Naive thymus-derived CD4-positive, alpha-beta T cell (primary cell): ENCODE measurements at regions of chr3 and their contacts with region 1.

Region 1: GRCh38 chr3:136861890-136862616 is at the start of gene NCK1:
- DNase-seq: peak; percentile 89 to 99 (median 98)
- ATAC-seq: peak; percentile 97
- H3K4me3 ChIP-seq: peak within 1 kb of the TSS; percentile 85
- H3K4me3 Mint-ChIP-seq: peak within 1 kb of the TSS; percentile 91 to 99 (median 94)
- H3K27ac ChIP-seq: peak within 1 kb of the TSS; percentile 93
- H3K27ac Mint-ChIP-seq: peak within 1 kb of the TSS; percentile 93 to 99 (median 97)
- H3K4me1 ChIP-seq: peaks cover 20 to 25% of the 10 kb centered on the region in 2 donors
- H3K4me1 Mint-ChIP-seq: peaks cover 32 to 74% (median 64%) of the 10 kb centered on the region in 7 donors
- H3K27me3 ChIP-seq: no peaks in the 10 kb centered on the region
- H3K27me3 Mint-ChIP-seq: no peaks in the 10 kb centered on the region
- total RNA-seq, gene NCK1: 41.1 to 59.6 (median 47.3) TPM

Region 2: GRCh38 chr3:136250226-136250902 is 611.7 kb before region 1 on chr3 and contains the start of gene PCCB:
- CTCF ChIA-PET with region 1: no interaction called
- POLR2A ChIA-PET with region 1: no interaction called
- intact Hi-C with region 1: loop called (anchors 1 to 2 kb)
- DNase-seq: peak; percentile 86 to 95 (median 93)
- ATAC-seq: peak; percentile 99
- H3K4me3 ChIP-seq: peak within 1 kb of the TSS; percentile 80
- H3K4me3 Mint-ChIP-seq: peak within 1 kb of the TSS; percentile 79 to 94 (median 90)
- H3K27ac ChIP-seq: peak within 1 kb of the TSS; percentile 80
- H3K27ac Mint-ChIP-seq: peak within 1 kb of the TSS; percentile 91 to 96 (median 93)
- H3K4me1 ChIP-seq: peaks cover 9% of the 10 kb centered on the region in 2 donors
- H3K4me1 Mint-ChIP-seq: peaks cover 12 to 30% (median 21%) of the 10 kb centered on the region in 7 donors
- H3K27me3 ChIP-seq: no peaks in the 10 kb centered on the region
- H3K27me3 Mint-ChIP-seq: no peaks in the 10 kb centered on the region
- total RNA-seq, gene PCCB: 13.6 to 22.6 (median 16.6) TPM

Region 3: DNA sequence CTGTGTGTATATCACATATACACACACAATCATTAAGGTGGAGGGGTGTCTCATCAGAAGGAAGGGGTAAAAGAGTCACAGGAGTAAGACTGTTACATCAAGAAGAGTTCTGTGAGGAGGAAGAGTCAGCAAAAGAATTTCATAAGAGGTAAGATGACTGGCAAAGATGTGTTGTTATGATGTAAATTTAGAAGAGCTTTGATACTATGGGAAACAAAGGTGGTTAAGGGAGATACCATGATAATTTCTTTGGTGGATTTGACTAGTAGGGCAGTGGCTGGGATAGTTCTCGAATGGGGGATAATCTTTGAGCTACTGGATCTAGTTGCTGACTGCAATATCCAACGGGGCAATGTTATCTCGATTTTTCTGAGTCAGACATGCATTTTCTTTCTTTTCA is 171.5 kb before region 1 on chr3:
- CTCF ChIA-PET with region 1: no interaction called
- POLR2A ChIA-PET with region 1: no interaction called
- intact Hi-C with region 1: no loop called
- DNase-seq: no peak
- ATAC-seq: peak; percentile 38
- H3K4me3 ChIP-seq: no peak overlapping the region
- H3K4me3 Mint-ChIP-seq: peak overlapping the region in 1 of 10 donors; percentile 39
- H3K27ac ChIP-seq: no peak overlapping the region
- H3K27ac Mint-ChIP-seq: peak overlapping the region in 2 of 9 donors; percentile 11 to 49
- H3K4me1 ChIP-seq: peaks cover 0 to 37% of the 10 kb centered on the region in 2 donors
- H3K4me1 Mint-ChIP-seq: peaks cover 16 to 64% (median 46%) of the 10 kb centered on the region in 7 donors
- H3K27me3 ChIP-seq: no peaks in the 10 kb centered on the region
- H3K27me3 Mint-ChIP-seq: no peaks in the 10 kb centered on the region

Region 4: DNA sequence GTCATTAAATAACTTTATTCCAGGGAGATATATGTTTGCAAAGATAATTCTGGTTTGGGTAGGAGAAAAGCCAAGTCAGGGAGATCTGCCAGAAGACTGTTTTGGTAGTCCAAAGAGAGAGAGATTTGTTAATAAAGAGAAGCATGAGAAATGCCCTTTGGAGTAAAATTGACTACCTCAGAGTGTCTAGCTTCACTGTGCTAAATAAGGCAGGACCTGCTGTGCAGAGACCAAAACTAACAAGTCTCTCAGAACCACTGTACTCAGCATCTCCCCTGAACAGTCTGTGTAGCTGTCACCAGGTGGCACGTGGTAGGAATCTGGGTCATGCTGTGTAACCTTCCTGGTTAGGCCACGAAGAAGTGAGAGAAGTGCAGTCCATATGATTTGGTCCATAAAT is 74.7 kb before region 1 on chr3:
- CTCF ChIA-PET with region 1: interaction called, 3 read pairs
- POLR2A ChIA-PET with region 1: no interaction called
- intact Hi-C with region 1: loop called in 1 of 2 experiments (anchors 2 kb)
- DNase-seq: peak in 2 of 9 donors; percentile 1 to 8
- ATAC-seq: peak; percentile 70
- H3K4me3 ChIP-seq: no peak overlapping the region
- H3K4me3 Mint-ChIP-seq: no peak overlapping the region
- H3K27ac ChIP-seq: no peak overlapping the region
- H3K27ac Mint-ChIP-seq: peak overlapping the region in 3 of 9 donors; percentile 28 to 81 (median 62)
- H3K4me1 ChIP-seq: peaks cover 0 to 10% of the 10 kb centered on the region in 2 donors
- H3K4me1 Mint-ChIP-seq: peaks cover 0 to 14% (median 13%) of the 10 kb centered on the region in 7 donors
- H3K27me3 ChIP-seq: no peaks in the 10 kb centered on the region
- H3K27me3 Mint-ChIP-seq: peaks cover 0 to 6% (median 2%) of the 10 kb centered on the region in 5 donors

Region 5: GRCh38 chr3:136838641-136839555 is 23.2 kb before region 1 on chr3:
- CTCF ChIA-PET with region 1: no interaction called
- POLR2A ChIA-PET with region 1: no interaction called
- intact Hi-C with region 1: loop called in 1 of 2 experiments (anchors 2 kb)
- DNase-seq: no peak
- ATAC-seq: no peak
- H3K4me3 ChIP-seq: no peak overlapping the region
- H3K4me3 Mint-ChIP-seq: peak overlapping the region in 1 of 10 donors; percentile 28
- H3K27ac ChIP-seq: no peak overlapping the region
- H3K27ac Mint-ChIP-seq: peak overlapping the region in 1 of 9 donors; percentile 64
- H3K4me1 ChIP-seq: no peaks in the 10 kb centered on the region
- H3K4me1 Mint-ChIP-seq: peaks cover 0 to 28% (median 7%) of the 10 kb centered on the region in 7 donors
- H3K27me3 ChIP-seq: no peaks in the 10 kb centered on the region
- H3K27me3 Mint-ChIP-seq: no peaks in the 10 kb centered on the region

Region 6: GRCh38 chr3:136899622-136900158 is 37.6 kb after region 1 on chr3:
- CTCF ChIA-PET with region 1: no interaction called
- POLR2A ChIA-PET with region 1: no interaction called
- intact Hi-C with region 1: loop called in 1 of 2 experiments (anchors 5 kb)
- DNase-seq: no peak
- ATAC-seq: peak; percentile 78
- H3K4me3 ChIP-seq: no peak overlapping the region
- H3K4me3 Mint-ChIP-seq: peak overlapping the region in 9 of 10 donors; percentile 13 to 68 (median 59)
- H3K27ac ChIP-seq: no peak overlapping the region
- H3K27ac Mint-ChIP-seq: peak overlapping the region in 8 of 9 donors; percentile 38 to 86 (median 58)
- H3K4me1 ChIP-seq: peaks cover 6 to 16% of the 10 kb centered on the region in 2 donors
- H3K4me1 Mint-ChIP-seq: peaks cover 35 to 71% (median 63%) of the 10 kb centered on the region in 7 donors
- H3K27me3 ChIP-seq: no peaks in the 10 kb centered on the region
- H3K27me3 Mint-ChIP-seq: no peaks in the 10 kb centered on the region

Region 7: DNA sequence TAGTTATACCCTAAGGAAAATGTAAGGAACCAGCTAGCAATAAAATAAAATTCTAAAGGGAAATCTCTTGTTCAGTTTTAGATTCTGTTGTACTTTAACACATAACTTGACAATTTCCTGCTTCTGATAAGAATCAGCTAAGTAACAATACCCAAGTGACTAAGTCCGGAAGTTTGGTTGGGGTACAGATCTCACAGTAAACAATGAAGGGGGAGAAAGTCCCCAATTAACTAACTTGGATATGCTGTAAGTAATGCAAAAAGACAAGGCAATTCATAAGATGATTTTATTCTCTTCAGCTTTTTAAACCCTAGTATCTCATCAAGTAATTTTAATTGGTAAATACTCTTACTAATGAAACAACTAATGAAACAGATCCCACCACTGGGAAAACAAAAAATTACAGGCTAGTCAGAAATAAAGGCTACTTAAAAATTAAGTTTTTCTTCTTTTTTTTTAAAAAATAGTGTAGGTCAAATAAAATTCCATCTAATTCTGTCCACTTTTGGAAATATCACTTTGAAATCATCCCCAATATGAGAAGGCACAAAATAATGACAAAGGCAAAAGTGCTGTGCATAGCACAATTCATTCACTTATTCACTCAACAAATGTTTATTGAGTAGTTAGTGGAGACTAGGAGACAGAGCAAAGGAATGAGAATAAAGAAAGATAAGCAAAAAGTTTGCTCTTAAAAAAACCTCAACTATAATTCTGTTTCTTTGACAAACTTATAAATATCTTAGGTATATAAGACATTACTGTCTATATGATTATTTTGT is 57.9 kb after region 1 on chr3:
- CTCF ChIA-PET with region 1: no interaction called
- POLR2A ChIA-PET with region 1: interaction called, 14 read pairs
- intact Hi-C with region 1: loop called (anchors 1 kb)
- DNase-seq: peak in 7 of 9 donors; percentile 8 to 51 (median 40)
- ATAC-seq: peak; percentile 94
- H3K4me3 ChIP-seq: no peak overlapping the region
- H3K4me3 Mint-ChIP-seq: peak overlapping the region in 8 of 10 donors; percentile 47 to 69 (median 60)
- H3K27ac ChIP-seq: peak overlapping the region; percentile 38
- H3K27ac Mint-ChIP-seq: peak overlapping the region in 6 of 9 donors; percentile 6 to 83 (median 70)
- H3K4me1 ChIP-seq: peaks cover 21 to 78% of the 10 kb centered on the region in 2 donors
- H3K4me1 Mint-ChIP-seq: peaks cover 60 to 94% (median 90%) of the 10 kb centered on the region in 7 donors
- H3K27me3 ChIP-seq: no peaks in the 10 kb centered on the region
- H3K27me3 Mint-ChIP-seq: no peaks in the 10 kb centered on the region

Region 8: DNA sequence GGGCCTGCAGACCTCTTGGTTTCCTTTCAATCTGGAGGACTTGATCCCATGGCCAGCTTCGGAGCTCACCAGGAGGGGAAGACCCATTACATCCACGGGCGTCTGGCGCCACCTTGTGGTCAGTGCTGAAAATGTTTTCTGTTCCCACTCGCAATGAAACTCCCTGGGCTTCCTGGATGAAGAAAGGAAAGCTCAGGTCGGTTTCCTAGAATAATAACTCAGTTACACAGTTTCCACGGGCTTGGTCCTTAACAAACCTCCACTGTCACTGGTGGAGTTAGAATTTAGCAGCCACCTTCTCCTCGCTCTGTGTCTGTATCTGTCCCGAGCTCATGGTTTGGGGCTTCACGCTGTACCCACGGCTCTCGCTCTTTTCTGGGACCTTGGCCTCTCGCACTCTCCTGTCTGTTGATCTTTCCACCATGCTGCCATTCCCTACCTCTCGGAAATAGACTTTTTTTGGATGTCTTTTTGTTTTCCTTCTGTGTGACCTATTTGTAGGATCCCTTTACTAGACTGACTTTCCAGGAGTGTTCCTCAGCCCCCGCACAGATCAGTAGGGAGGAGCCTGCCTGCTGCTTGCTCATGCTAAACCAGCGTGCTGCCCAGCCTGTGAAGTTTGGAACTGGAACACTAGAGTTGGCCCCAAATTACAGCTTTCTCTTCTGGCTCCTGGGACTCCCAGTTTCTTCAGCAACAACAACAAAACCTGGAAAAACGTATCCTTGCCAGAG is 152.1 kb after region 1 on chr3:
- CTCF ChIA-PET with region 1: interaction called, 8 read pairs
- POLR2A ChIA-PET with region 1: interaction called, 7 read pairs
- intact Hi-C with region 1: loop called (anchors 1 to 2 kb)
- DNase-seq: peak; percentile 59 to 87 (median 78)
- ATAC-seq: peak; percentile 93
- H3K4me3 ChIP-seq: peak overlapping the region; percentile 43
- H3K4me3 Mint-ChIP-seq: peak overlapping the region; percentile 65 to 87 (median 80)
- H3K27ac ChIP-seq: no peak overlapping the region
- H3K27ac Mint-ChIP-seq: peak overlapping the region in 4 of 9 donors; percentile 24 to 64 (median 57)
- H3K4me1 ChIP-seq: no peaks in the 10 kb centered on the region
- H3K4me1 Mint-ChIP-seq: peaks cover 5 to 10% (median 9%) of the 10 kb centered on the region in 7 donors
- H3K27me3 ChIP-seq: no peaks in the 10 kb centered on the region
- H3K27me3 Mint-ChIP-seq: peaks cover 0 to 4% (median 0%) of the 10 kb centered on the region in 5 donors

Region 9: GRCh38 chr3:137259701-137260100 is 397.6 kb after region 1 on chr3:
- CTCF ChIA-PET with region 1: no interaction called
- POLR2A ChIA-PET with region 1: no interaction called
- intact Hi-C with region 1: no loop called
- DNase-seq: no peak
- ATAC-seq: no peak
- H3K4me3 ChIP-seq: no peak overlapping the region
- H3K4me3 Mint-ChIP-seq: no peak overlapping the region
- H3K27ac ChIP-seq: no peak overlapping the region
- H3K27ac Mint-ChIP-seq: no peak overlapping the region
- H3K4me1 ChIP-seq: no peaks in the 10 kb centered on the region
- H3K4me1 Mint-ChIP-seq: no peaks in the 10 kb centered on the region
- H3K27me3 ChIP-seq: no peaks in the 10 kb centered on the region
- H3K27me3 Mint-ChIP-seq: peaks cover 1 to 17% (median 13%) of the 10 kb centered on the region in 5 donors